Transverse colon (tissue), 4 donors: ENCODE measurements at regions of chrX and their contacts with region 1.

Region 1: DNA sequence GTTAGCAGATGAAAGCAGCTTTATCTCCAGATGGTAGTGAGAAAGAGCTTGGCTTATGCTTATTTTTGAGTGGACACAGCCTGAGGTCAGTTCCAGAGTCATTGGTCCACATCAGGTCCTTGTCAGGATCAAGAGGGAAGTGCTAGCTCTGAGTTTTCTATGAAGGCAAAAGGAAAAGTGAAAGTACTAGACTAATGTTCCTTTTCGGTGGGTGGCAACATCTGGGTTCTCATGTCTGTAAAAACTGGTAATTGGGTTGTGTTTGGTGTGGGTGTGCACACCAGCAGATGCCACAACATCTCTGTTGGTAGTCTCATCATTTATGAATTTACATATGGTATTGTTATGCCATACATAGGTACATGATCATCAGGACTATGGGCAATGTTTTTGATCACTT is 210.5 kb downstream of the PWWP3B start:
- DNase-seq: no peak
- H3K4me3 ChIP-seq: no peak overlapping the region
- H3K27ac ChIP-seq: no peak overlapping the region
- H3K4me1 ChIP-seq: no peaks in the 10 kb centered on the region
- H3K27me3 ChIP-seq: no peaks in the 10 kb centered on the region
- CTCF ChIP-seq: no peak
- EP300 ChIP-seq: no peak
- POLR2A ChIP-seq: no peak

Region 2: DNA sequence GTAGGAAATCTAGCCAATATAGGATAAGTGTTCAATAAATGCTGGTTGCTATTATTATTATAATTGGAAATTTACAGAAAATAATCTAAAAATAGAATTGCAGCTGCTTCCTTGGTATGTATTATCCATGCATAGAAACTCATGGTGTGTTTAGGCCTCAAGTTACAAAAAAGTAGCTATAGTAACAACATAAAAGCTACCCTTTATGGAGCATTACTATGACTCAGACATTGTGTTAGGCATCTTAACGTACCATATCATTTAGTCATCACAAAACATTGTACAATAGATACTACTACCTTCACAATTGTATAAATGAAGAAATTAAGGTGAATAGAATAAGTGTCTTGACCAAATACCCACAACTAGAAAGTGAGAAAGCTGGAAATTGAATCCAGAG is 683.2 kb before region 1 on chrX:
- in situ Hi-C with region 1: no loop called
- intact Hi-C with region 1: loop called (anchors 5 kb)
- DNase-seq: no peak
- H3K4me3 ChIP-seq: no peak overlapping the region
- H3K27ac ChIP-seq: no peak overlapping the region
- H3K4me1 ChIP-seq: no peaks in the 10 kb centered on the region
- H3K27me3 ChIP-seq: no peaks in the 10 kb centered on the region
- CTCF ChIP-seq: no peak
- EP300 ChIP-seq: no peak
- POLR2A ChIP-seq: no peak